WTC11 (cell line): ENCODE measurements at regions of chr20 and their contacts with region 1.

Region 1: DNA sequence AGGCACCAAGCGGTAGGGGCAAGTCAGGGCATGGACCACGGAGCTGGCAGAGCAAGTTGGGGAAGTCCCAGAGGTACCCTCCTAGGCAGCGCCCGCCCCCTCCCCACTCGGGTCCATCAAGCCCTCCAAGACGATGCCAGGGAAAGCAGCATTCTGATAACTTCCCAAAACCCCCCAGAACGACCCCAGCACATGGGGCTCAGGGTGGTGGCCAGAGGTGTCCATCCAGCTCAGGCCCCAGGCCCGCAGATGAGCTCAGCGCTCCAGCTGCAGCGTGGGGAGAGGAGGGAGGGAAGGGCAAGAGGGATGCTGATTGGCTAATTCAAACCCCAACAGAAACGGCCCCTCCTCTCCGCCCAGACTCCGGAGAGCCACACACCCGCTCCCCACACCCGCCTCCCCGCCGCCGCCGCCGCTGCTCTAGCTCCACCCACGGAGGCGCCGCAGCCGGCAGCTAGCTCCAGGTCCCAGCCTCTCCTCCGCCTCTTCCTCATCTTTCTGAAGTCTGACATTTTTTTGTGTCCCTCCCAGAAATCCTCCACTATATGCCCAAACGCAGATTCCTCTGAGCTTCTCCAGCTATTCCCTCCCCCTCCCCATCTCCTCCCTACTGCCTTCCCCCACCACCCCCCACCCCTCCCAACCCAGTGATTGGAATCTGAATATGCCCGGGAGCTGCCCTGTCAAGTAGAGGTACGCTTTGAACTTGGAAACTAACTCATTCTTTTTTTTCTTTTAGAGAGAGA is 40.3 kb upstream of the TLDC2 start:
- DNase-seq: peak; percentile 91
- ATAC-seq: peak; percentile 92
- H3K4me3 Mint-ChIP-seq: peak overlapping the region; percentile 67
- H3K27ac Mint-ChIP-seq: peak overlapping the region; percentile 89
- H3K4me1 Mint-ChIP-seq: peaks cover 26% of the 10 kb centered on the region
- H3K27me3 Mint-ChIP-seq: no peaks in the 10 kb centered on the region
- CTCF ChIP-seq: no peak

Region 2: GRCh38 chr20:35820715-35821114 is 1014.9 kb before region 1 on chr20:
- CTCF ChIA-PET with region 1: no interaction called
- POLR2A ChIA-PET with region 1: interaction called, 10 read pairs
- DNase-seq: no peak
- ATAC-seq: no peak
- H3K4me3 Mint-ChIP-seq: no peak overlapping the region
- H3K27ac Mint-ChIP-seq: peak overlapping the region; percentile 38; the same call in 1 of the 2 replicates
- H3K4me1 Mint-ChIP-seq: no peaks in the 10 kb centered on the region
- H3K27me3 Mint-ChIP-seq: no peaks in the 10 kb centered on the region
- CTCF ChIP-seq: no peak

Region 3: GRCh38 chr20:36808317-36809257 is 27.0 kb before region 1 on chr20:
- CTCF ChIA-PET with region 1: interaction called, 65 read pairs
- POLR2A ChIA-PET with region 1: no interaction called
- DNase-seq: peak; percentile 84
- ATAC-seq: peak; percentile 74
- H3K4me3 Mint-ChIP-seq: no peak overlapping the region
- H3K27ac Mint-ChIP-seq: peak overlapping the region; percentile 79
- H3K4me1 Mint-ChIP-seq: no peaks in the 10 kb centered on the region
- H3K27me3 Mint-ChIP-seq: no peaks in the 10 kb centered on the region
- CTCF ChIP-seq: peak; percentile 93

Region 4: GRCh38 chr20:36821964-36822437 is 13.6 kb before region 1 on chr20:
- CTCF ChIA-PET with region 1: interaction called, 22 read pairs
- POLR2A ChIA-PET with region 1: no interaction called
- DNase-seq: no peak
- ATAC-seq: peak; percentile 46
- H3K4me3 Mint-ChIP-seq: no peak overlapping the region
- H3K27ac Mint-ChIP-seq: peak overlapping the region; percentile 62
- H3K4me1 Mint-ChIP-seq: peaks cover 28% of the 10 kb centered on the region
- H3K27me3 Mint-ChIP-seq: no peaks in the 10 kb centered on the region
- CTCF ChIP-seq: no peak

Region 5: GRCh38 chr20:36861875-36862801 is 26.5 kb after region 1 on chr20:
- CTCF ChIA-PET with region 1: interaction called, 89 read pairs
- POLR2A ChIA-PET with region 1: interaction called, 10 read pairs
- DNase-seq: peak; percentile 36
- ATAC-seq: no peak; the same call in 1 of the 2 replicates
- H3K4me3 Mint-ChIP-seq: peak overlapping the region; percentile 68
- H3K27ac Mint-ChIP-seq: no peak overlapping the region
- H3K4me1 Mint-ChIP-seq: peaks cover 46% of the 10 kb centered on the region
- H3K27me3 Mint-ChIP-seq: peaks cover 18% of the 10 kb centered on the region
- CTCF ChIP-seq: no peak